Activated naive CD4-positive, alpha-beta T cell treated with anti-CD3 and anti-CD28 coated beads for 36 hours (primary cell): ENCODE measurements at regions of chr1 and their contacts with region 1.

Region 1: DNA sequence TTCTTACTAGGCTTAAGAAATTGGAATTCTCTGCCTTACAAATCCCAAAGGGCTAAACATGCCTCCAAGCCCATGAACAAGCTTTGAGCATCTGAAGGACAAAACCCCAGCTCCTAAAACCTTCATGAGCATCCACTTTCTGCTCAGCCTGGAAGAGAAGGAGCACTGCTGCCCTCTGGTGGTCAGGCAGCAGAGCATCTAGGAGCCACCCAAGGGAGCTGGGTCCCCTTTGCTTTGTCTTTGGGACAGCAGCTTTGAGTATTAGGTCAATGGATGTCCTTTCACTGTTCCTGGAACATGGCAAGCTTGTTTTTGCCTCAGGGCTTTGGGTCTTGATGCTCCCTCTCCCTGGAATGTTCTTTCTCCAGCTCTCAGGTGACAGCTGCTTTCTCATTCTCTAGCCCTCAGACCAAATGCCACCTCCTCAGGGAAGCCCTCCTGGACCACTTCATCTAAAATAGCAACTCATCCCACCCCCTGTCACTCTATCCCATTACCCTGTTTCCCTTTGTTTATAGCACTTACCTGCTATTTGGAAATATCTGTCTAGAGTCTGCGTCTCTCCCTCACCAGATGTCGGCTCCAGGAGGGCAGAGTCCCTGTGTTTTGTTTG is 25.7 kb downstream of the RAB7B start:
- DNase-seq: peak; percentile 88
- H3K4me3 Mint-ChIP-seq: no peak overlapping the region
- H3K27ac Mint-ChIP-seq: no peak overlapping the region
- H3K4me1 Mint-ChIP-seq: no peaks in the 10 kb centered on the region
- H3K27me3 Mint-ChIP-seq: no peaks in the 10 kb centered on the region

Region 2: GRCh38 chr1:205591522-205592351 is 385.8 kb before region 1 on chr1:
- CTCF ChIA-PET with region 1: interaction called, 11 read pairs
- intact Hi-C with region 1: loop called (anchors 5 kb)
- DNase-seq: peak; percentile 96
- H3K4me3 Mint-ChIP-seq: peak overlapping the region; percentile 88
- H3K27ac Mint-ChIP-seq: peak overlapping the region; percentile 90
- H3K4me1 Mint-ChIP-seq: peaks cover 48% of the 10 kb centered on the region
- H3K27me3 Mint-ChIP-seq: no peaks in the 10 kb centered on the region

Region 3: GRCh38 chr1:205604825-205605505 is 372.5 kb before region 1 on chr1:
- CTCF ChIA-PET with region 1: no interaction called
- intact Hi-C with region 1: no loop called
- DNase-seq: no peak
- H3K4me3 Mint-ChIP-seq: no peak overlapping the region
- H3K27ac Mint-ChIP-seq: peak overlapping the region; percentile 56
- H3K4me1 Mint-ChIP-seq: peaks cover 35% of the 10 kb centered on the region
- H3K27me3 Mint-ChIP-seq: no peaks in the 10 kb centered on the region

Region 4: DNA sequence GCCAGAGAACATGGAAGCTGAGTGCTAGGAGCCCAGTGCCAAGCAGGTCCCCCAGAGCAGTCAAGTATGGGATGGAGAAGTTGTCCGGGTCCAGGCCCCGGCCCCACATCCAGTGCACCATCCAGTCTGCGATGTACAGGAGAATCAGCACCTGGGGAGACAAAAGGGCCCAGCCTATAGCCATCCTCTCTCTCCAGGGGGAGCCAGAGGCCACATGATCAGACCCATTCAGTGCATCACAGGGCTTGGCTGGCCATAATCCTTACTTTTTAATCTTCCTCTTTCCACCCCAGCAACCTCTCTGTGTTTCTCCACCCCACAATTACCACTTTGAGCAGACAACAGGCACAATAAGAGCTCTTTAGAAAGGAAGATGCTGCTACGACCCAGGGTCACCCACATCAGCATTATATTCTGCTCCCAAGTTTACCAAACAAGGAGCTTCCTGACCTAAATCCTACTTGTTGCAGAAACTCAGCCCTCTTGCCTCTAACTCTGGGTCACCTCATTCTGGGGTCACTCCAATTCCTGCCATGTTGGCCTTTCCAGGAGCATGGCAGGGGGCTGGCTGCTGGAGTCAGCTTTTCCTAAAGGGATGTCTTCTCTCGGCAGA is 185.8 kb before region 1 on chr1:
- CTCF ChIA-PET with region 1: interaction called, 82 read pairs
- intact Hi-C with region 1: loop called (anchors 1 kb)
- DNase-seq: peak; percentile 80
- H3K4me3 Mint-ChIP-seq: no peak overlapping the region
- H3K27ac Mint-ChIP-seq: no peak overlapping the region
- H3K4me1 Mint-ChIP-seq: no peaks in the 10 kb centered on the region
- H3K27me3 Mint-ChIP-seq: no peaks in the 10 kb centered on the region

Region 5: GRCh38 chr1:205919026-205919746 is 58.3 kb before region 1 on chr1:
- CTCF ChIA-PET with region 1: interaction called, 172 read pairs
- intact Hi-C with region 1: loop called (anchors 1 kb)
- DNase-seq: peak; percentile 91
- H3K4me3 Mint-ChIP-seq: no peak overlapping the region
- H3K27ac Mint-ChIP-seq: no peak overlapping the region
- H3K4me1 Mint-ChIP-seq: no peaks in the 10 kb centered on the region
- H3K27me3 Mint-ChIP-seq: no peaks in the 10 kb centered on the region

Region 6: GRCh38 chr1:206001476-206001888 is 24.0 kb after region 1 on chr1:
- CTCF ChIA-PET with region 1: interaction called, 16 read pairs
- intact Hi-C with region 1: no loop called
- DNase-seq: peak; percentile 60
- H3K4me3 Mint-ChIP-seq: no peak overlapping the region
- H3K27ac Mint-ChIP-seq: no peak overlapping the region
- H3K4me1 Mint-ChIP-seq: peaks cover 22% of the 10 kb centered on the region
- H3K27me3 Mint-ChIP-seq: peaks cover 5% of the 10 kb centered on the region